IMR-90 (cell line): ENCODE measurements at regions of chr10 and their contacts with region 1.

Region 1: DNA sequence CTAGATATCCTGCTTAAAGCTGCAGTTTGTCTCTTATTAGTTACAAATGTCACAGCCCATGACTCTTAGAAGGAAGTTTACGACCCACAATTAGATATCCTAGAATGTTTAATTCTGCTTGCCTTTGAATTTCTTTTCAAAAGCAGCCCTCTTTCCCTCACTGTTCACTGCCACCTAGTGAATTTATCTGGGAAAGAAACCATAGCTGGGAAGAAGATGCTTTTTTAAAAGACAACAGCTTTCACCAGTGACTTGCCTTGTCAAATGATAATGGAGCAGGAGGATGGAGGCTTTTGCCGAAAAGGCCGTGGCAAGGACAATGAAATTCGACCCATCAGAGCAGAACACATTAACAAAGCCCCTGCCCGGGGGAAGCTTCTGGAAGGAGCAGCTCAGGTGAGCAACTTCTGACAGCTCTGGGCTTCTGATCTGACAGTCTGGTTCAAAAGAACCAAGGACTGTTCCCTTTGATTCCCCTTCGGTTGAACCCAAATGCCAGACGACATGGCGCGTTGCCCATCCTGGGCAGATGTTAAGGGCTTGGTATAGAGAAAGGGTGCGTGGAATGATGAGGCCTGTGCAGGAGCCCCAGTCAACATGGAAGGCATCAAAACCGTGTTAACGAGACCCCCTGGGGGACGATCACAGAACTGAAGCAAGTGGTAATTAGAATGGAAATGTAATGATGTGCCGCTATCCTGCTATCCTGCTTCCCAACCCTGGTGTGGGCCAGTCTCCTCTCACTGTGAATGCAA is 236.8 kb downstream of the FRMD4A start:
- DNase-seq: peak; percentile 66
- ATAC-seq: peak; percentile 75
- H3K4me3 ChIP-seq: no peak overlapping the region
- H3K27ac ChIP-seq: no peak overlapping the region
- H3K4me1 ChIP-seq: no peaks in the 10 kb centered on the region
- H3K27me3 ChIP-seq: no peaks in the 10 kb centered on the region
- CTCF ChIP-seq: peak; percentile 86
- POLR2A ChIP-seq: no peak
- RAD21 ChIP-seq: peak; percentile 91

Region 2: GRCh38 chr10:13659897-13660550 is 433.9 kb before region 1 on chr10:
- CTCF ChIA-PET with region 1: no interaction called
- POLR2A ChIA-PET with region 1: no interaction called
- dilution Hi-C with region 1: no loop called
- in situ Hi-C with region 1: loop called (anchors 25 kb)
- intact Hi-C with region 1: loop called (anchors 10 kb)
- DNase-seq: peak; percentile 50
- ATAC-seq: peak; percentile 81
- H3K4me3 ChIP-seq: no peak overlapping the region
- H3K27ac ChIP-seq: peak overlapping the region; percentile 18; the same call in 1 of the 2 replicates
- H3K4me1 ChIP-seq: peaks cover 14% of the 10 kb centered on the region
- H3K27me3 ChIP-seq: no peaks in the 10 kb centered on the region
- CTCF ChIP-seq: peak; percentile 82
- POLR2A ChIP-seq: no peak
- RAD21 ChIP-seq: peak; percentile 92

Region 3: GRCh38 chr10:14009371-14010100 is 84.4 kb before region 1 on chr10:
- CTCF ChIA-PET with region 1: no interaction called
- POLR2A ChIA-PET with region 1: no interaction called
- dilution Hi-C with region 1: no loop called
- in situ Hi-C with region 1: no loop called
- intact Hi-C with region 1: loop called (anchors 1 kb)
- DNase-seq: peak; percentile 90
- ATAC-seq: peak; percentile 15
- H3K4me3 ChIP-seq: peak overlapping the region; percentile 32
- H3K27ac ChIP-seq: peak overlapping the region; percentile 85
- H3K4me1 ChIP-seq: peaks cover 5% of the 10 kb centered on the region
- H3K27me3 ChIP-seq: no peaks in the 10 kb centered on the region
- CTCF ChIP-seq: no peak
- POLR2A ChIP-seq: peak; percentile 76
- RAD21 ChIP-seq: 0 out of 2 replicates have a peak, but pooled peaks have one; percentile 1

Region 4: GRCh38 chr10:14153570-14154055 is 59.7 kb after region 1 on chr10:
- CTCF ChIA-PET with region 1: no interaction called
- POLR2A ChIA-PET with region 1: no interaction called
- dilution Hi-C with region 1: no loop called
- in situ Hi-C with region 1: no loop called
- intact Hi-C with region 1: no loop called
- DNase-seq: peak; percentile 37
- ATAC-seq: peak; percentile 46
- H3K4me3 ChIP-seq: no peak overlapping the region
- H3K27ac ChIP-seq: no peak overlapping the region
- H3K4me1 ChIP-seq: peaks cover 6% of the 10 kb centered on the region
- H3K27me3 ChIP-seq: peaks cover 9% of the 10 kb centered on the region
- CTCF ChIP-seq: no peak
- POLR2A ChIP-seq: no peak
- RAD21 ChIP-seq: no peak

Region 5: GRCh38 chr10:14185316-14186045 is 91.6 kb after region 1 on chr10:
- CTCF ChIA-PET with region 1: no interaction called
- POLR2A ChIA-PET with region 1: interaction called, 13 read pairs
- dilution Hi-C with region 1: no loop called
- in situ Hi-C with region 1: no loop called
- intact Hi-C with region 1: no loop called
- DNase-seq: peak; percentile 90
- ATAC-seq: peak; percentile 92
- H3K4me3 ChIP-seq: no peak overlapping the region
- H3K27ac ChIP-seq: no peak overlapping the region
- H3K4me1 ChIP-seq: peaks cover 2% of the 10 kb centered on the region; the same call in 1 of the 2 replicates
- H3K27me3 ChIP-seq: peaks cover 32% of the 10 kb centered on the region
- CTCF ChIP-seq: no peak
- POLR2A ChIP-seq: peak; percentile 99
- RAD21 ChIP-seq: no peak